Ovary (tissue), 10 donors: ENCODE measurements at regions of chr11 and their contacts with region 1.

Region 1: GRCh38 chr11:109304159-109304558 is 117.8 kb upstream of the C11orf87 start:
- DNase-seq: no peak
- H3K4me3 ChIP-seq: no peak overlapping the region
- H3K27ac ChIP-seq: no peak overlapping the region
- H3K4me1 ChIP-seq: no peaks in the 10 kb centered on the region
- H3K27me3 ChIP-seq: no peaks in the 10 kb centered on the region
- CTCF ChIP-seq: no peak
- EP300 ChIP-seq: no peak
- POLR2A ChIP-seq: no peak

Region 2: DNA sequence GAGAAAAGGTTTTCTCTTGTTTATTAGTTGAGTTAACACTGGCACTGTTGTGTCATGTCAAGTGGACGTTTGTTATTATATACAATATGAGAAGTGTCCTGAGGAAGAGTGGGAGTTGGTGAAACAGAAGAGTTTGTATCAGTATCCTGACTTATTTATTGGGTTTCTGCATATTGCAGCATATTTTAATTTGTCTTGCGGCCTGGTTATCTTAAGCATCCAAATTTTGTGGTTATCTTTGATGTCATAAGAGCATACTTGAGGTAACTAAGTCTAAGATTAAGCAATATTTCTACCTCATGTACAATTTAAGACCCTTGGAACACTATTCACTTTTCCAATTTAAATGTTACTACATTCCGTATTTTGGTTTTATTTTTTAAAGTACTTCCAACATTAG is 535.8 kb before region 1 on chr11:
- intact Hi-C with region 1: no loop called
- DNase-seq: no peak
- H3K4me3 ChIP-seq: no peak overlapping the region
- H3K27ac ChIP-seq: no peak overlapping the region
- H3K4me1 ChIP-seq: no peaks in the 10 kb centered on the region
- H3K27me3 ChIP-seq: no peaks in the 10 kb centered on the region
- CTCF ChIP-seq: no peak
- EP300 ChIP-seq: no peak
- POLR2A ChIP-seq: no peak

Region 3: DNA sequence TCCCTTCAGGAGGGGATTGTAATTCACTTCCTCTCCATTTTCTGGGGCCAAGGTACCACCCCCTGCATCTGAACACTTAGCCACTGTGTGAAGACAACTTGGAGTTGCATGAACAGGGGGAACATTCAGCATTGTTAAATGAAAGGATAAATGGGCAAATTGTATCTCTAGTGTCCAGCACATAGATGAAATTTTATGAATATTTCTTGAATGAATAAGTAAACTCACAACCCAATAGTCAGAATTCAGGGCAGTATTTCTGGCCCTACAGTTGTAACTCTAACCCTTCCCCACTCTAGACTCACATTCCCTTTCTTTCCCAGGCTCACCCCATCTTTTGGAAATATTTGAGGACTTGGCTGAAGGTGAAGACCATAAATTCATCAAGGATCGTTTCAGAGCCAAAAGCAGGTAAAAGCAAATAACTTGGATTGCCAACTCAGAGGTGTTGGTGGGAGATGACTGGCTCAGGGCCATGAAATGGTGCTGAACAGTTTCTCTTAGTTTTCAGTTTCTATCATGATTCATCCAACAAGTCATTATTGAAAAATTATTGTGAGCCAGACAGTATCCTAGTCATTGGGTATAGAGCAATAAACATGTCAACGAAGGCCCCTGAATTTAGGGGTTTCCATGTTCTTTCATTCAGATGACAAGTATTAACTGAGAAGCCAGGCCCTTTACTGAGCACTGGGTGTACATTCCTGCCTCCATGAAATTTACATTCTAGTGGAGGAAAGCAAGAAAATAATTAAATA is 755.7 kb after region 1 on chr11:
- intact Hi-C with region 1: loop called in 1 of 4 experiments (anchors 5 kb)
- DNase-seq: no peak
- H3K4me3 ChIP-seq: no peak overlapping the region
- H3K27ac ChIP-seq: no peak overlapping the region
- H3K4me1 ChIP-seq: no peaks in the 10 kb centered on the region
- H3K27me3 ChIP-seq: no peaks in the 10 kb centered on the region
- CTCF ChIP-seq: no peak
- EP300 ChIP-seq: no peak
- POLR2A ChIP-seq: no peak